ENCODE measurements at regions of chr7 and their contacts with region 1.

Region 1: DNA sequence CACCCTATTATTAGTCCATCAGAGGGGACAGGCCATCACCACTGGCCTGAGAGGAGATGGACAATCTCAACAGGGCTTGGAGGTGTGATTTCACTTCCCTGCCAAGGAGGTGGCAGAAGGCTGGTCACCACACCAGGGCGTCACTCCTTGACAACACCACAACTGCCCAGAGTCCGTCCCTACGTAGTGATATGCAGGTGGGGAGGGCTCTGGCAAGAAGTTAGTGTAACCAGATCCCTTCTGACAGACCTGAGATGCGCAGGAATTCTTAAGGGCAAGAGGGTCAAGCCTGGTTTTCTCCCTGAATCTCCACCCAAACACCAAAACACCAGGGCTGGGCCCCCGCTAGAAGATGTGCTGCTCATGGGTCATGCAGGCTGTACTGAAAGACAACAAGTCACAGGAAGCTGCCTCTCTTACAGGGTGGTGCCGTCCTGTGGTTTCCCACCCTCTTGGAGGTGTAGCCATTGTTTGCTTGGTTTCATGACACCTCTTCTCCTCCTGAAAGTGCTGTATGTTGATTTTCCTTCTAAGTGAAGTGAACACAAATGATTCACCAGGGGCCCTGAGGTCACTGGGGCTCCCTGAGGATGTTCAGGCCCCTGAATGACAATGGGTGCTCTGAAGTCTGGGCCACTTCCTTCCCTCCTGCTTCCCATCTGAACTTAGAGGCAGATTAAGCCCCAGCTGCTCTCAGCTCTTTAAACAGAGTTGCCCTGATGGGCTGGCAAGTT is 27.1 kb downstream of the ATXN7L1 start:
- DNase-seq: peak; percentile 83
- H3K4me3 ChIP-seq: no peak overlapping the region
- H3K27ac ChIP-seq: peak overlapping the region; percentile 44
- H3K4me1 ChIP-seq: peaks cover 21% of the 10 kb centered on the region
- H3K27me3 ChIP-seq: no peaks in the 10 kb centered on the region
- CTCF ChIP-seq: no peak

Region 2: DNA sequence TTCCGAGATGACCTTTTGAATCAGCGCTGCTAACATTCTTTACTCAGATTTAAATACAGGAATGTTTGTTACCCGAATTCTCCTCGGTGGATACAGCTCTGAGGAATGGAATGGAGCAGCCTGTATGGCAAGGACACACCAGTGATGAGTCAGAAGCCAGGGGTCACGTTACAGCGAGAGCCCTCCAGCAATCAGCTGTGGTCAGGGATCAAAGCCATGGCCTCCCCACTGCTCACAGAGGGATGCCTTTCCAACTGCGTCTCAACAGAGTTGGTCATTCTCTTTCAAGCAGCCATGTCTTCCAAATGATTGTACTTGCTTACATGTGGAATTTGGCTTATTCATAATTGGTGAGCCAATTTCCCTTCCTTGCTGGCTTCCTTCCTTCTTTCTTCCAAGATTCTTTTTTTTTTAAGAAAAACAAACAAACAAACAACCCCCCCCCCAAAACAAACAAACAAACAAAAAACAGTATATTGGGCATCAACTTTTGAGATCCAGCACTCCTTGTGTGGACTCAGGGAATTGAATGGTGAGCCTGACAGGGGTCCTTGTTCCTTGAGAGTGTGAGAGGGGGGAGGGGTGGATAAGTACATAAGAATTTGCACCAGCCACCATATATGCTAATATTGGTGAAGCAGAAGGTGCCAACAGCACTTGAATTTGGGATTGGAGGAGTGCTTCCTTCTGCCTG is 73.1 kb before region 1 on chr7:
- CTCF ChIA-PET with region 1: no interaction called
- POLR2A ChIA-PET with region 1: no interaction called
- intact Hi-C with region 1: loop called (anchors 1 kb)
- DNase-seq: peak; percentile 96 to 99
- H3K4me3 ChIP-seq: no peak overlapping the region
- H3K27ac ChIP-seq: peak overlapping the region; percentile 87
- H3K4me1 ChIP-seq: peaks cover 33% of the 10 kb centered on the region
- H3K27me3 ChIP-seq: no peaks in the 10 kb centered on the region
- CTCF ChIP-seq: no peak

Region 3: DNA sequence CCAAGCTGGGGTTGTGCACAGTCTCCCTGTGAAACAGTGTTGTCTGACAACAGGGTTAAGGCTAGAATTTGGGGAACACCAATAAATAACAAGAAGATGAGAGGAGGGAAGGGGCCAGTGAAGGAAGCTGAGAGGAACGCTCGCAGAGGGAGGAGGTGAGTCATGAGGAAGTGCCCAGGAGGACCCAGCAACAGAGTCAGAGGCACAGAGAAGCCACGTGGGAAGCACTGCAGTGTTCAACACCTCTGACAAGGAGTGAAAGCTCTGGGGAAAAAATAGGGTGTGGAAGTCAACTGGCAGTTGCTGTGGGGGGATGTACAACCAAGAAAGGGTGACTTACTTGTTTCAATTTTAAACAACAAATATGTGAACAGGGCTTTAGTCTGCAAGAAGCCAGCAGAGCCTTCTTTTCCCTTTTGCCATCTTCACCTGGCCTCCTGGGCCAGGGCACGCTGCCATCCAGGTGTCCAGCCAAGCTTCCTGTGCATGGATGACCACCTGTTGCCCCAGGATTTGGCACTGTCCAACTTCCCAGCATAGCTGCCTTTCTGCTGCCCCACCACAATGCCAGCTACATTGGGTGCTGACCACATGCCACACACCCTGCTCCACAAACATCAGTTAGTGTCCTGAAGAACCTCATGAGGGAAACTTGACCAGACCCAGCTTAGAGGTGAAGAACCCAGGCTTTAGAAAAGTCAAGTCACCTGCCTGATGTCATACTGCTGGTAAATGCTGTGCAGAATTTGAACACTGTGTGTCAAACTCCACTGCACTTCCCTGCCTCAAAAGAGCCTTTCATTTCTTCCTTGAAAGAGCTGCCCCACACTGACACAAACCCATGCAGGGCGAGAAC is 42.5 kb before region 1 on chr7:
- CTCF ChIA-PET with region 1: no interaction called
- POLR2A ChIA-PET with region 1: no interaction called
- intact Hi-C with region 1: loop called (anchors 1 kb)
- DNase-seq: peak; percentile 65 to 83
- H3K4me3 ChIP-seq: no peak overlapping the region
- H3K27ac ChIP-seq: peak overlapping the region; percentile 20
- H3K4me1 ChIP-seq: peaks cover 32% of the 10 kb centered on the region
- H3K27me3 ChIP-seq: no peaks in the 10 kb centered on the region
- CTCF ChIP-seq: no peak

Measured in PC-9 (cell line).